AG04450 (cell line): ENCODE measurements at regions of chr11 and their contacts with region 1.

Region 1: DNA sequence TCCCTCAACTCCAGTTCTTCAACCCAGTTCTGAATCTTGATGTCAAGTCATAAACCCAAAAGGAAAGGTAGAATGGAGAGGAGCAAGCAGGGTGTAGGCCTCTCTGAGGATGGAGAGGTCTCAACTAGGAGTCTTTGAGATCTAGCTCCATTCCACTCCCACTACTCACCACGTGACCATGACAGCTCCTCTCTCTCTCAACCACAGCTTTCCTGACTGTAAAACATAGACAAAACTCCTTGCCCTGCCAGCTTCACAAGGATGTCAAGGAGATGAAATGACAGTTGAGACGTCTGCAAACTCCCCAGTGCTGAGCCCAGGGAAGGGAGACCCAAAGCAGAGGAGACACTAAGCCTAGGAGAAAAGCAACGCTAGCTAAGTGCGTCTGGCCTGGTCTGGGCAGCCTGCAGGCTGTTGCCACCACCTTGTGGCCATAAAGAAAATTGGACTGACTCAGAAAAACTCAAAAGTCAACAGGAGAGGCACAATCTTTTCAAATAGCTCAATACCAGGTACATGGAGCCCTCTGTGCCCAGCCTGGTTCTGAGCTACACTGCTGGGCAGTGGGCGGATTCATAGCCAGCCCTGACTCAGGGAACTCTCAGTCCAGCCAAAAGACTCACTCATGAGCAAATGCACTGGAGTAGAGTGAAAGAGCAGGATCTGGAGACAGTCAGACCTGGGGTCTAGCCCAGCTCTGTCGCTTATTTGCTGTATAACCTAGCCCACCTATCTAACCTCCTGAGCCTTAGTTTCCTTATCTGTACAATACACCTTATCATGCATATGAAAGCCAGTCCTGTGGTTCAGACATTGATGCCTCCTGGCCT is 3.4 kb downstream of the CLPB start:
- DNase-seq: peak; percentile 18
- H3K4me3 ChIP-seq: no peak overlapping the region
- H3K27ac ChIP-seq: no peak overlapping the region
- H3K27me3 ChIP-seq: no peaks in the 10 kb centered on the region
- CTCF ChIP-seq: peak; percentile 86

Region 2: GRCh38 chr11:71977743-71978418 is 453.1 kb before region 1 on chr11:
- CTCF ChIA-PET with region 1: interaction called, 47 read pairs
- POLR2A ChIA-PET with region 1: no interaction called
- DNase-seq: no peak
- H3K4me3 ChIP-seq: no peak overlapping the region
- H3K27ac ChIP-seq: no peak overlapping the region
- H3K27me3 ChIP-seq: no peaks in the 10 kb centered on the region
- CTCF ChIP-seq: peak; percentile 72

Region 3: GRCh38 chr11:72030472-72031045 is 400.4 kb before region 1 on chr11:
- CTCF ChIA-PET with region 1: interaction called, 47 read pairs
- POLR2A ChIA-PET with region 1: no interaction called
- DNase-seq: no peak
- H3K4me3 ChIP-seq: no peak overlapping the region
- H3K27ac ChIP-seq: no peak overlapping the region
- H3K27me3 ChIP-seq: no peaks in the 10 kb centered on the region
- CTCF ChIP-seq: no peak

Region 4: GRCh38 chr11:72141066-72141465 is 289.9 kb before region 1 on chr11:
- CTCF ChIA-PET with region 1: interaction called, 14 read pairs
- POLR2A ChIA-PET with region 1: no interaction called
- DNase-seq: peak; percentile 69
- H3K4me3 ChIP-seq: no peak overlapping the region
- H3K27ac ChIP-seq: peak overlapping the region; percentile 80
- H3K27me3 ChIP-seq: no peaks in the 10 kb centered on the region
- CTCF ChIP-seq: no peak

Region 5: DNA sequence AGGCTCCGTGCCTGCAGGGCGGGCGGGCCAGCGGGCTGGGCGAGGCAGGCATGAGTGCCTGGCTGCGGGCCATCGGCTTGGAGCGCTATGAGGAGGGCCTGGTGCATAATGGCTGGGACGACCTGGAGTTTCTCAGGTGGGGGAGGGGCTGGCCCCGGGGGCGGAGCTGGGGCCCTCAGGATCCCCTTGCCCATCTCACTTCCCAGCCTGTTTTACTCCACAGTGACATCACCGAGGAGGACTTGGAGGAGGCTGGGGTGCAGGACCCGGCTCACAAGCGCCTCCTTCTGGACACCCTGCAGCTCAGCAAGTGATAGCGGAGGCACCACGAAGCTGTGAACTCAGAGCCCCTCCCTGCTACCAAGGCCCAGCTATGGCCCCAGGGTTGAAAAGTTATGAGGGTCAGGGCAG is 192.9 kb before region 1 on chr11:
- CTCF ChIA-PET with region 1: interaction called, 34 read pairs
- POLR2A ChIA-PET with region 1: interaction called, 3 read pairs
- DNase-seq: no peak
- H3K4me3 ChIP-seq: no peak overlapping the region
- H3K27ac ChIP-seq: no peak overlapping the region
- H3K27me3 ChIP-seq: peaks cover 27% of the 10 kb centered on the region
- CTCF ChIP-seq: peak; percentile 79

Region 6: GRCh38 chr11:72280037-72280436 is 150.9 kb before region 1 on chr11:
- CTCF ChIA-PET with region 1: no interaction called
- POLR2A ChIA-PET with region 1: no interaction called
- DNase-seq: no peak
- H3K4me3 ChIP-seq: no peak overlapping the region
- H3K27ac ChIP-seq: no peak overlapping the region
- H3K27me3 ChIP-seq: peaks cover 9% of the 10 kb centered on the region
- CTCF ChIP-seq: no peak

Region 7: GRCh38 chr11:72352859-72353551 is 78.0 kb before region 1 on chr11:
- CTCF ChIA-PET with region 1: interaction called, 12 read pairs
- POLR2A ChIA-PET with region 1: no interaction called
- DNase-seq: peak; percentile 67
- H3K4me3 ChIP-seq: no peak overlapping the region
- H3K27ac ChIP-seq: no peak overlapping the region
- H3K27me3 ChIP-seq: no peaks in the 10 kb centered on the region
- CTCF ChIP-seq: peak; percentile 79

Region 8: DNA sequence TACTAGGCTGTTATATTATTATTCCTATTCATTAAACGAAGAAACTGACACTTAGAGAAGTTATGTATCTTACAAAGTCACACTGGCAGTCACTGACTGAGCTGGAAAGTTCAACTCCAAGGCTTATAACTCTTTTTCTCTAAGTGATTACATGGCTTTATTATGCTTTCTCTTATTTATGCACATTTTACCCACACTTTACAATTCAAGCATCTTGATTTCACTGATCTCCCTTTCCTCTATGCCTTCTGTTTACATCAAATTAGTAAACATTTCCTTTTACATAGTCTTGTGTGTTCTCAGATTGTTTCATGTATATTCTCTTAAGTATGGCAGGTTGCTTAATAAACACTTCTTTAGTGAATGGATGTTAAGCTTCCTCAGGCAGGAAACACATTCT is 62.6 kb before region 1 on chr11:
- CTCF ChIA-PET with region 1: no interaction called
- POLR2A ChIA-PET with region 1: no interaction called
- DNase-seq: no peak
- H3K4me3 ChIP-seq: no peak overlapping the region
- H3K27ac ChIP-seq: no peak overlapping the region
- H3K27me3 ChIP-seq: no peaks in the 10 kb centered on the region
- CTCF ChIP-seq: no peak